Activated B cell treated with CpG ODN at 0.5 μM for 24 hours (primary cell): ENCODE measurements at regions of chr6 and their contacts with region 1.

Region 1: DNA sequence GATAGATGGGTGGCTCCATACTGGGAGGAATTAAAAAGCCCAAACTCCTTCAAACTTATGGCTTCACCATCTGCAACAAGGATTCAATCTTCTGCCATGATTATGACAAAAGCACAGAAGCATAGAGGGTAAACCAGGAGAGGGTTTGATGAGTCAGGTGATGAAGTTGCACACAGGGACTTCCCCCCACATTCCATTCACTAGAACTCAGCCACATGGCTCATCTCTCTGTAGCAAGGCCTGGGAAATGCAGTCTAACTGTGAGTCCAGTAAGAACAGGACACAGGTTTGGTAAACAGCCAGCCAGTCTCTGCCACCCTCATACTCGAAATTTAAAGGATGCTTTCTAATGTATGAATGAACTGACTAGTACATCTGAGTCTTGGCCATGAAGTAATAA is 142.9 kb downstream of the HIVEP2 start:
- DNase-seq: no peak
- ATAC-seq: peak; percentile 41
- H3K4me3 Mint-ChIP-seq: no peak overlapping the region
- H3K27ac Mint-ChIP-seq: peak overlapping the region; percentile 4
- H3K4me1 Mint-ChIP-seq: peaks cover 55% of the 10 kb centered on the region
- H3K27me3 Mint-ChIP-seq: no peaks in the 10 kb centered on the region
- CTCF ChIP-seq: no peak

Region 2: GRCh38 chr6:142752348-142752747 is 49.8 kb before region 1 on chr6:
- CTCF ChIA-PET with region 1: no interaction called
- POLR2A ChIA-PET with region 1: no interaction called
- intact Hi-C with region 1: no loop called
- DNase-seq: no peak
- ATAC-seq: no peak
- H3K4me3 Mint-ChIP-seq: no peak overlapping the region
- H3K27ac Mint-ChIP-seq: no peak overlapping the region
- H3K4me1 Mint-ChIP-seq: peaks cover 10% of the 10 kb centered on the region
- H3K27me3 Mint-ChIP-seq: no peaks in the 10 kb centered on the region
- CTCF ChIP-seq: no peak

Region 3: GRCh38 chr6:142784344-142784743 is 17.8 kb before region 1 on chr6:
- CTCF ChIA-PET with region 1: no interaction called
- POLR2A ChIA-PET with region 1: no interaction called
- intact Hi-C with region 1: loop called (anchors 2 kb)
- DNase-seq: no peak
- ATAC-seq: peak; percentile 98
- H3K4me3 Mint-ChIP-seq: peak overlapping the region; percentile 15
- H3K27ac Mint-ChIP-seq: peak overlapping the region; percentile 78
- H3K4me1 Mint-ChIP-seq: peaks cover 34% of the 10 kb centered on the region
- H3K27me3 Mint-ChIP-seq: no peaks in the 10 kb centered on the region
- CTCF ChIP-seq: no peak

Region 4: DNA sequence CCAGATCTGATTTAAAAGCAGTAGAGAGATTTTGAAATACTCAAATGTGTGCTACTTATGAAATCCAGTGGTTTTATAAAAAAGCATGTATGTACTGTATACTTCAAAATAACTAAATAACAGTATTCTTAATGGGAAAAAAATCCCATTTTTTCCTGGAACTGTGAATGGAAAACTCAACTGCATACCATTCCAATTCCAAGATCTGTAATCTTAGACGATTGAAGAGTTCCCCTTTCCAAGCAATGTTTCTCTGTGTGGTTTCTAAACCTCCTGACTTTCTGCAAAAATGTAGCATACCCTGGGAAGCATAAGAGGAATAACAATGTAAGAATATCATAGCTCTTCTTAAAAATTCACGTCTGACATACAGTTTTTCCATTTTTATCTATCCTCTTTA is 183.2 kb after region 1 on chr6:
- CTCF ChIA-PET with region 1: no interaction called
- POLR2A ChIA-PET with region 1: no interaction called
- intact Hi-C with region 1: no loop called
- DNase-seq: no peak
- ATAC-seq: no peak
- H3K4me3 Mint-ChIP-seq: no peak overlapping the region
- H3K27ac Mint-ChIP-seq: no peak overlapping the region
- H3K4me1 Mint-ChIP-seq: peaks cover 1% of the 10 kb centered on the region
- H3K27me3 Mint-ChIP-seq: peaks cover 3% of the 10 kb centered on the region
- CTCF ChIP-seq: no peak